ENCODE measurements at regions of chr18 and their contacts with region 1.

Region 1: DNA sequence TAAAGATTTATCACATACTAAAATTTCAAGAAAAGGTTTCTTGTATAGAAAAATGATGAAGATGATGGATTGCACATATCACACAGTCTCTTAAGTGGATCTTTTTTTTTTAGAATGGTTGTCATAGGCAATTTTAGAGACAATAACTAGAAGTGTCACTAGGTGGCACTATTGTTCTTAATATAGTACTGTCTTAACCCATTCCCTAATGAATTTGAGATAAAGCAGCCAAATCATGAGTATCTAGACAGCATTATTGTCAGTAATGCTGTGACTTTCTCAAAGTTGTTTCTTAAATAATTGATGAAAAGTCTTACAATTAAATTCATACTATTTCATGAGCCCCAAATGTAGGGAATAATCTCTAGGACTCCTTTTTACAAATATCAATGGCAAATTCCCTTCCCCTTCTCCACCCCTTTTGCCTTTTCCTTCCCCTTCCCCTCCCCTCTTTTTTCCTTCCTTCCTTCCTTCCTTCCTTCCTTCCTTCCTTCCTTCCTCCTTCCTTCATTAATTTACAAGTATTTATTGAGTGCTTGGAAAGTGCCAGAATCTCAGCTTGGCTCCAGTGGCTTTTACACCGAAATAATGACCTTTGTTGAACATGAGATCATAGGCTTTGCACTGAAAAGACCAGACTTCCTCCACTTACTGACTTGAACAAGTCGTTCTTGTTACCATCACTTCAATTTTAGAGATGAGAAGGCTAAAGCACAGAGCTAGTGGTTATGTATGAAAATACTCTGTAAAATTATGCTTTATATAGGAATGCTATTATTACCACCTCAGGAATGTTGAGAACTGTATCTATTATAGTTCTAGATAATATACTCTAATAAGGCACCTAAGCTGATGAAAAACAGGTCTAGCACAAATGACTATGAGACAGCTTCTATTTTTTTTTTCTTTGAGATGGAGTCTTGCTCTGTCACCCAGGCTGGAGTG is 19.8 kb downstream of the MYL12B start:
- DNase-seq: peak in 1 of 2 experiments; percentile 75
- H3K4me3 ChIP-seq: no peak overlapping the region
- H3K27ac ChIP-seq: peak overlapping the region; percentile 23; the same call in 1 of the 2 replicates
- H3K4me1 ChIP-seq: peaks cover 24% of the 10 kb centered on the region
- H3K27me3 ChIP-seq: no peaks in the 10 kb centered on the region
- CTCF ChIP-seq: peak; percentile 85

Region 2: GRCh38 chr18:3380384-3380961 is 98.7 kb after region 1 on chr18:
- CTCF ChIA-PET with region 1: interaction called, 5 read pairs
- POLR2A ChIA-PET with region 1: interaction called, 23 read pairs
- intact Hi-C with region 1: loop called (anchors 1 kb)
- DNase-seq: peak in 1 of 2 experiments; percentile 81
- H3K4me3 ChIP-seq: peak overlapping the region; percentile 35; the same call in 1 of the 2 replicates
- H3K27ac ChIP-seq: peak overlapping the region; percentile 99
- H3K4me1 ChIP-seq: peaks cover 64% of the 10 kb centered on the region
- H3K27me3 ChIP-seq: no peaks in the 10 kb centered on the region
- CTCF ChIP-seq: peak; percentile 44; the same call in 1 of the 2 replicates

Region 3: DNA sequence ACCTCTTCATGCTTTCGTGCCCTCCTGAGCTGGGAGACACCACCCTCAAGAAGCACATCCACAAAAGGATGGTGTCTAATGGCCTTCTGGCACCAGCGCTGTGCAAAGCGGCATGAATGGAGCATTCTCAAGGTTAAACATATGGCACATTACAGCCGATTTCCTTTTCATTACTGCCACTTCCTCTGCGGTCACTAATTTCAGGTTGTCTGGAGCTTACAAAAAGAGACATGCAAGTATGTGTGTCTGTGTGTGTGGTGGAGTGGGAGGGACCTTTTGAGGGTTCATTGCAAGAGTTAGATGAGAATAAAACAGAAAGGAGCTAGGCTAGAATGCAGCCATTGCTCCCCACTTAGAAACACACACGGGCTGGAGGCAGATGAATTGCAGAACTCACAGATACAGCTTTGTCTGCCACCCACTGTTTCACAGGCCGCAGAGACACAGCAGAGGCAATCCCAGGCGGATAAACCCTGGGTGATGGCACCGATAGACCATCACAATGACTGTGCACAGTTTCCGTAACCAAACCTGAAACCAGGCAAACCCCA is 244.2 kb after region 1 on chr18:
- CTCF ChIA-PET with region 1: no interaction called
- POLR2A ChIA-PET with region 1: no interaction called
- intact Hi-C with region 1: no loop called
- DNase-seq: no peak
- H3K4me3 ChIP-seq: no peak overlapping the region
- H3K27ac ChIP-seq: no peak overlapping the region
- H3K4me1 ChIP-seq: no peaks in the 10 kb centered on the region
- H3K27me3 ChIP-seq: no peaks in the 10 kb centered on the region
- CTCF ChIP-seq: no peak

Region 4: GRCh38 chr18:3585656-3586509 is 304.2 kb after region 1 on chr18:
- CTCF ChIA-PET with region 1: interaction called, 5 read pairs
- POLR2A ChIA-PET with region 1: no interaction called
- intact Hi-C with region 1: loop called (anchors 2 kb)
- DNase-seq: peak; percentile 58 to 81
- H3K4me3 ChIP-seq: no peak overlapping the region
- H3K27ac ChIP-seq: no peak overlapping the region
- H3K4me1 ChIP-seq: peaks cover 33% of the 10 kb centered on the region; the same call in 1 of the 2 replicates
- H3K27me3 ChIP-seq: no peaks in the 10 kb centered on the region
- CTCF ChIP-seq: peak; percentile 67

Region 5: DNA sequence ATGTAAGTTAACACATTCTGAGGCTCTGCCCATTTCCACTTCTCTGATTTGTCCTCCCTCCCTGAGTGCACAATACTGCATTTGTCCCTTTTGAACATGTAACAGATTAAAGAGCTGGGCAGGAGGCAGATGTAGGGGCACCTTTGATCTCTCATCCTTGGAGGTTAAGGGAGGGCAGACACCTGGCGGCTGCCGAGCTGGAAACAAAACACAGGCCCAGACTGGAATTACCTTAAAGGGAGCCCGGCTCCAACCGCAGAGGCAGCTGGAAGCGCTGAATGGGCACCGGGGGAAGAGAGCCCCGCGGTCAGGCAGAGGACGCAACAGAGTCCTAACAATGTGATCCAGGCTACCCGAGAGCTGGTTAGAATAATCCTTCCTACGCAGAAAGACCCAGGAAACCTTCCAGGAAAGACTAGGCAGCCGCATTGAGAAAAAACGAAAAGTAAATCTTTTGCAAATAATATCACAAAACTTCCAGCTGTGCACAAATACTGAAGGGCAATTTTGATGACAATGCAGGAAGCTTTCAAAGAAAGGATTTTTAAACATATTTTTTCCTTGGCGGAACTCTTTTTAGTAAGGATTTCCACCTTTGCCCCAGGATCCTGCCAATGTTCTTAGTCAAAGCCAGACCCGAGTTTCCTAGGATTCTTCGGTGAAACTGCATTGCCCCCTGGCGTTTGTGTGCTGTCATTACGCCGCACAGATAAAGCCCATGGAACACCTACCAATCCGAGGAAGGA is 384.2 kb after region 1 on chr18:
- CTCF ChIA-PET with region 1: interaction called, 8 read pairs
- POLR2A ChIA-PET with region 1: interaction called, 5 read pairs
- intact Hi-C with region 1: loop called (anchors 1 kb)
- DNase-seq: peak; percentile 78 to 89
- H3K4me3 ChIP-seq: peak overlapping the region; percentile 45; the same call in 1 of the 2 replicates
- H3K27ac ChIP-seq: peak overlapping the region; percentile 96
- H3K4me1 ChIP-seq: peaks cover 33% of the 10 kb centered on the region
- H3K27me3 ChIP-seq: no peaks in the 10 kb centered on the region
- CTCF ChIP-seq: peak; percentile 97

Region 6: DNA sequence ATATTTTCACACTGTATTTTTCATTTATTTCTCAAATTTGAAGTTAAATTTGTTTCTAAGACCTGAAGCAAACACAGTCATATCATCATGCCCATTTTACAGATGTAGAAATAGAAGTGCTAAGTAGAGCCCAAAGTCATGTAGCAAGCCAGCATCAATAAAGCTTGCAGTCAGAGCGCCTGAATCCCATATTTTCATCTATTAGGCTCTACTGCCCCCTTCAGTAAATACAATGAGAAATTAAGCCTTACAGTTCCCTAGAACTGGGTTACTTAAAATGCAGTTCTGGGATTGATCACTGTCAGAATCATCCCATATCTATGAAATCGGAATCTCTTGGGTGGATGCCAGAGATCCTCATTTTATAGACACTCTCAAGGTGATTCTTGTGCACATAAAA is 588.1 kb after region 1 on chr18:
- CTCF ChIA-PET with region 1: no interaction called
- POLR2A ChIA-PET with region 1: interaction called, 7 read pairs
- intact Hi-C with region 1: loop called (anchors 2 kb)
- DNase-seq: no peak
- H3K4me3 ChIP-seq: no peak overlapping the region
- H3K27ac ChIP-seq: no peak overlapping the region
- H3K4me1 ChIP-seq: no peaks in the 10 kb centered on the region
- H3K27me3 ChIP-seq: no peaks in the 10 kb centered on the region
- CTCF ChIP-seq: peak; percentile 78